GM23248 (cell line): ENCODE measurements at regions of chr10 and their contacts with region 1.

Region 1: DNA sequence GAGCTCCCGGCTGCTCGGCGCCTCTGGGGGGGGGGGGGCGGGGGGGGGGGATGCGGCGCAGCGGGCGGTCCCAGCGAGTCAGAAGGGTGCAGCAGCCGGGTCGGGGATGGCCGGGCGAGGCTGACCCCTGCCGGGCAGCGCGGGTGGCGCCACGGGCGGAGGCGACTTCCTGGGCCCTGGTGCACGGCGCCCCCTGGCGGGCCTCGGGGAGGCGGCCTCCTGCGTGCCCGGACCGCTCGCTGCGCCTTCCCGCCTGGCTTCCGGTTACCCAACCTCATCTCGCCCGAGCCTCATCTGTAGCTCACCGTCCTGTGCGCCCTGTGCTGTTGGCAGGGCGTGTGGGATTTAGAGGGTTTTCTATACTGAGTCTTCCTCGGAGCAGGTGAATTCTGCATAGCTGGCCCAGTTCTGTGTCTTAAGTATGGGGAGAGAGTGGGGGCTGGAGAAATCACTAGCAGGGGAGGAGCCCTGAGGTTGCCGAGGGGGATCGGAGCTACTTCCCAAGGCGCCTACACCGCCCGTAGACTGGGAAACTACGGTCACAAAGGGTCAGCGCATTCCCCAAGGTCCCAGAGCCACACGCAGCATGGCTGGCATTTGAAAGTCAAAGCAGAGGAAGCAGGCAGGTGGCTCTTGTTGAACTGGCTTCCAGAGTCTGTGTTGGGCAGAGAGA is 28.3 kb upstream of the WDFY4 start:
- DNase-seq: peak; percentile 94
- H3K4me3 ChIP-seq: peak overlapping the region; percentile 74
- H3K27ac ChIP-seq: peak overlapping the region; percentile 73
- H3K4me1 ChIP-seq: peaks cover 11% of the 10 kb centered on the region; the same call in 1 of the 2 replicates
- H3K27me3 ChIP-seq: 0 out of 2 replicates have a peak, but pooled peaks cover 4% of the 10 kb centered on the region

Region 2: DNA sequence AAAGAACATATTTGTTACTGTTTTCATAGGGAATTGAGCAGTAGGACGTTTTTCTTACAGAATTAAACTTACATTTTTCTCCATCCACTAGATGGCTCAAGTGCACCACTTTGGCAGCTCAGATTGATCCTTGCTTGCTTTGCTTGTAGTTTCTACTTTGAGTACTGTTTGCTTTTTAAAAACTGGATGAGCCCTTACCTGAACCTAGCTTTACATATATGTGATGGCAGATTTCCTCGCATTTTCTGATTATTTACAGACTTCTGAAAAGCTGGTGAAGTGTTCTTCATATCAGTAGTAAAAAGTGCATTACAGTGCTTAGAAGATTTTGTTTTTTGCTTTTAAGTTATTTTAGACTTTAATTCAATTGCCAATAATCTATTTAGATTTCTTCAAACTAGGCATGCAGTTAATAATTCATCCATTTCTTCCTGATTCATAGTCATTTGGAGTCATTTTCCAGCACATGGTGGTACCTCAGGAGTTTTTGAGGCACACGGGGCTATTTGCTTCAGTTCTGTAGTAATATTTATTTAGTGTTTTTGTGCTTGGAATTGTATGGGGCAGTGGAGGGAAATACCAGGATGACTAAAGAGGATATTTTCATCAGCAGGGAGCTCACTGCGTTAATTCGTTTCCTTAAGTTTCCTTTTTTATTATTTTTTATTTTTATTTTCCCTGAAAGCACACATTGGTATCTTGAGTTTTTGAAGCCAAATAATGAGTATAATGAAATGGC is 292.6 kb before region 1 on chr10:
- in situ Hi-C with region 1: loop called (anchors 10 kb)
- DNase-seq: peak; percentile 81
- H3K4me3 ChIP-seq: peak overlapping the region; percentile 32
- H3K27ac ChIP-seq: peak overlapping the region; percentile 45
- H3K4me1 ChIP-seq: peaks cover 33% of the 10 kb centered on the region
- H3K27me3 ChIP-seq: no peaks in the 10 kb centered on the region

Region 3: DNA sequence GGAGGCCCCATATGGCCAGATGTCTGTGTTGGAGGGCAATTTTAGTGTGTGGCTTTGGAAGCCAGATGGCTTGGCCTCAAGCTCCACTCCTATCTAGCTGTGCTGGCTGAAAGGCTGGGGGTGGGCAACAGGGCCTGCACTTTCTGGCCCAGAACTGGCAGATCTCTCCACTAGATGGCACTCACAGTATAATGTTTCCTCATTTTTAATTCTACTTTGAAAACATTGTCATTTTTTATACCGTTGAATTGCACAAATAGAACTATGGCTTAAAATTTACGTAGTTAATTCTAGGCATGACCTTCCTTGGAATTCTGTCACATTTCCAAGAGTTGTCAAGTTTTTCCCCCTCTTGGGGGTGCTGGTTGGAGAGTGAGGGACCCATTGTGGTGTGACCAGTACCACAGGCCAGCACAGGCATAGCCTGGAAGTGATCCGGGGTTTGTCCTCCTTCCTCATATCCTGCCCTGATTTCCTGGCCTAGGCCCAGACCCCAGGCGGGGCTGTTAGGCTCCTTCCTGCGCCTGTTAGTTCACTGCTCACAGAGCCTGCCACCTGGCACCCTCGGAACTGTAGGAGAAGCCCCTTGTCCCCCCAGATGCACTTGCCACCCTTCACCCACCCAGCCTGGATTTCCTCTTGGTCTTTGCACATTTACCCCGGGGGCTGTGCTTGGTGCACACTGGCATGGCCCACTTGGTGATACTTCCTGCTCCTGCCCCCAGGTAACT is 104.4 kb before region 1 on chr10:
- in situ Hi-C with region 1: loop called (anchors 5 kb)
- DNase-seq: peak; percentile 69
- H3K4me3 ChIP-seq: no peak overlapping the region
- H3K27ac ChIP-seq: no peak overlapping the region
- H3K4me1 ChIP-seq: no peaks in the 10 kb centered on the region
- H3K27me3 ChIP-seq: no peaks in the 10 kb centered on the region

Region 4: GRCh38 chr10:48907730-48908129 is 251.4 kb after region 1 on chr10:
- in situ Hi-C with region 1: no loop called
- DNase-seq: no peak
- H3K4me3 ChIP-seq: no peak overlapping the region
- H3K27ac ChIP-seq: no peak overlapping the region
- H3K4me1 ChIP-seq: no peaks in the 10 kb centered on the region
- H3K27me3 ChIP-seq: peaks cover 50% of the 10 kb centered on the region

Region 5: DNA sequence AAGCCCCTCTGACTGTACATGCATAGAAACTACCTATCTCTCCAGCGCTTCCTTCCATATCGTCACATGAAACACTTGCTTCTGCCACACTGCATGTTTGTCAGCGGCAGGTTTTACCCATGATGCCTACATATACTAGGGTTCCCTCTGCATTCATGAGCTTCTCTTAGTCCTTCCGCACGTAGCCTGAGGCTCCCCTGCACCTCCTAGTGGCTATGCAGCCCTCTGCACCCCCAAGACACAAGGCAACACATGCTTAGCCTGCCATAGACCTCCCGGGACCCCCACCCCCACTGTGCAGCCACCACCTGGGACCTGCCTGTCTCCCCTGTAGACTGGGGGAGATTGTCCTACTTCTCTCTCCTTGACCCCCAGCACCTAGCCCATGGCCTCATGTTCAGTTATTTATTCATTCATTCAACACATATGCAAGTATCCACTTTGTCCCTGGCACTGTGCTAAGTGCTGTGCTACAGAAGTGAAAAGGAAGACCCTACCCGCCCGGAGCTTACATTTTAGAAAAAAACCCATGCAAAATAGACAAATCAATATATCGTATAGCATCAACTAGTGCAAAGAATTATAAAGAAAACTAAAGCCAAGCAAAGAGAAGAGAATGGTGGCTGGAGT is 508.3 kb after region 1 on chr10:
- in situ Hi-C with region 1: loop called (anchors 25 kb)
- DNase-seq: peak; percentile 71
- H3K4me3 ChIP-seq: no peak overlapping the region
- H3K27ac ChIP-seq: no peak overlapping the region
- H3K4me1 ChIP-seq: peaks cover 17% of the 10 kb centered on the region
- H3K27me3 ChIP-seq: no peaks in the 10 kb centered on the region